Activated CD8-positive, alpha-beta memory T cell treated with anti-CD3 and anti-CD28 coated beads, Interleukin-2, amount 10 ng/mL, durations not matched to agents 7 days and 5 days (primary cell): ENCODE measurements at regions of chr16 and their contacts with region 1.

Region 1: DNA sequence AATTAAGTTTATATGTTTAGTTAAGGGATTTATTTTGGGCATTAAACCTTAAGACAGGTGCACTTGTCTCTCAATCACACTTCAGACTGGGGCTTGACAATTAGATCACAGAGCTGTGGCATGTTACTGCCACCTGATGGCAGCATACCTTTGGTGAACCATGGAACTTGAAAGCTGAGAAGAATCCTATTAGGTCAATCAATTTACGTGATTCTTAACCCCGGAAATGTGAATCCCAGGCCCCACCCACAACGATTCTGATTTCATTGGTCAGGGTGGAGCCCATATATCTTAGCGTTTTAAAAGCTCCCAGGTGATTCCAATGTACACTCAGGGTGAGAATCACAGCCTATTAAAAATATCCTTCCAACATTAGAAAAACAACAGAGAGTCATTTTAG is 91.0 kb downstream of the GSG1L start:
- DNase-seq: peak; percentile 74
- ATAC-seq: peak; percentile 93
- H3K4me3 Mint-ChIP-seq: no peak overlapping the region
- H3K27ac Mint-ChIP-seq: no peak overlapping the region
- H3K4me1 Mint-ChIP-seq: peaks cover 4% of the 10 kb centered on the region
- H3K27me3 Mint-ChIP-seq: peaks cover 26% of the 10 kb centered on the region

Region 2: DNA sequence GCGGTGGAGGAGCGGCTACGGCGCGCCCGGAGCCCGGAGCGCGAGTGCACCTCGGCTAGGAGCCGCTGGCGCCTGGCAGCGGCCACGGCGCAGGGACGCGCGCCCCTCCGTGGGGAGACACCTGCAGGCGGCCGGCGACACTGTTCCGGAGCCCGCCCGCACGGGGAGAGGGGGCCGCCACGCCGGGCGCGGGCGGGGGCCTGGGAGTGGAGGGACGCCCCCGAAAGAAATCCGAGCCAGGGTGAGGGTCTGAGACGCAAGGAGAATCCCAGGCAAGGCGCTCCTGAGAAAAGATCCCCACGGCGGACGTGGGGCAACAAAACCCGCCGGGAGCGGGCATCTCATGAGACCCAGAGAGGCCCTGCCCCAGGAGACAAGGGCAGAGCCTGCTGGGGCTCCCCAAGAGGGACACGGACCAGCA is 91.2 kb after region 1 on chr16 and contains the start of gene GSG1L:
- CTCF ChIA-PET with region 1: interaction called, 119 read pairs
- DNase-seq: no peak
- ATAC-seq: no peak
- H3K4me3 Mint-ChIP-seq: no peak within 1 kb of the TSS
- H3K27ac Mint-ChIP-seq: no peak within 1 kb of the TSS
- H3K4me1 Mint-ChIP-seq: no peaks in the 10 kb centered on the region
- H3K27me3 Mint-ChIP-seq: peaks cover 60% of the 10 kb centered on the region
- total RNA-seq, gene GSG1L: not detected